ENCODE measurements at regions of chr2 and their contacts with region 1.

Region 1: DNA sequence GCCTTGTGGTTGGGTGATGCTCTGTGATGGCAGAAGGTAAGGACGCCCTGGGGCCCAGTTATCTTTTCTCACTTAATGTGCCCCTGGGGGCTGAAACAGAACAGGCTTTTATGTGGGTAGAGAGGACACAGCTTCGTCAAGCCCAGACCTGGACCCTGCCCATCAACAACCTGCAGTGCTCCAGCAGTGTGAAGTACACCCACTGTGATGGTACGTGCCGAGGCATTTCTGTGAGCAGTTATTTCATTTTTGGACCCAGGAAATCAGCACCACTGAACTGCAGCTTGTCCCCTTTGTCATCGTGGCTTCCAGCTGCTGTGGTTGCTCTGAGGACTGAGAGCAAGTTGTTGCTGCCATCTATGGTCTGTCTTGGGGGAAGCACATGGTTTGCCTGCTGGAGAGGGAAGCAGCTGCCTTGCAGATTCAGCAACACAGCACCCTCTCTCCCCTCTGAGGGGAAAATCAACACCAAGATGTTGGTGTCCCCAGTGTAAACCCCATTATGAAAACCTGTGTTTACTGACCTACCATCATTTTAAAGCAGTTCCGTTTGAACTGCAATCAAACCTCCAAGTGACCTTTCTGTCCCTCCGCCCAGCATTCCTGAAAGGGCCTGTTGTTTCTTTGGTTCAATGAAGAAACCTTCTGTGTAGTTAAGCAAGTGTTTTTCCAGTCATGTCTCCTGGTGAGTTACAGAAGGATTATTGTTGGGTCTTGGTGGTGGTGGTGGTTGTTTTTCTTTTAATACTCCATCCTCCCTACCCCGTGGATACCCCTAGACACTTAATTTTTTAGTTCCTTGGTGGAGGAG is 158.2 kb downstream of the MGAT5 start:
- DNase-seq: peak; percentile 50 to 92 (median 86)
- H3K4me3 ChIP-seq: peak overlapping the region in 47 of 59 donors; percentile 1 to 50 (median 25)
- H3K27ac ChIP-seq: peak overlapping the region; percentile 44 to 95 (median 90)
- H3K27me3 ChIP-seq: no peaks in the 10 kb centered on the region
- CTCF ChIP-seq: peak; percentile 49 to 91 (median 79)

Region 2: DNA sequence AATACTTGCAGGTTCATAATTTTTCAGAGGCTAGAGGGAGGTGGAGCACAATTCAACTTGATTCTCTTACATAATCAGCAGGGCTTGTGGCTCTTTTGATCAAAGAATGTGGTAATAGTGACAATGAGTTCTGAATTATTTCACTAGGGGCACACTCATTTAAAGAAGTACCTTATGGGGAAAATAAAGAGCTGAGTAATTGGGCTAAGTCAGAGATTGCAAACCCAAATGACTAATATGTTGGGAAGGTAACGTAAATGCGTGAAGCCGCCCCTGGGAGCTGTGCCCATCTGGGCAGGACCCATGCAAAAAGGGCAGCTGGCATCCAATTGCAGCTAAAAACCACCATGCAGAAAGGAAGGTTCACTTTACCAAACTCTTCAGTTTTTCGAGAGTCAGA is 879.1 kb before region 1 on chr2:
- intact Hi-C with region 1: no loop called
- DNase-seq: no peak
- H3K4me3 ChIP-seq: no peak overlapping the region
- H3K27ac ChIP-seq: no peak overlapping the region
- H3K27me3 ChIP-seq: no peaks in the 10 kb centered on the region
- CTCF ChIP-seq: no peak

Region 3: GRCh38 chr2:134193006-134193405 is 219.0 kb before region 1 on chr2:
- intact Hi-C with region 1: loop called in 1 of 2 experiments (anchors 5 kb)
- DNase-seq: no peak
- H3K4me3 ChIP-seq: no peak overlapping the region
- H3K27ac ChIP-seq: no peak overlapping the region
- H3K27me3 ChIP-seq: no peaks in the 10 kb centered on the region
- CTCF ChIP-seq: no peak

Region 4: DNA sequence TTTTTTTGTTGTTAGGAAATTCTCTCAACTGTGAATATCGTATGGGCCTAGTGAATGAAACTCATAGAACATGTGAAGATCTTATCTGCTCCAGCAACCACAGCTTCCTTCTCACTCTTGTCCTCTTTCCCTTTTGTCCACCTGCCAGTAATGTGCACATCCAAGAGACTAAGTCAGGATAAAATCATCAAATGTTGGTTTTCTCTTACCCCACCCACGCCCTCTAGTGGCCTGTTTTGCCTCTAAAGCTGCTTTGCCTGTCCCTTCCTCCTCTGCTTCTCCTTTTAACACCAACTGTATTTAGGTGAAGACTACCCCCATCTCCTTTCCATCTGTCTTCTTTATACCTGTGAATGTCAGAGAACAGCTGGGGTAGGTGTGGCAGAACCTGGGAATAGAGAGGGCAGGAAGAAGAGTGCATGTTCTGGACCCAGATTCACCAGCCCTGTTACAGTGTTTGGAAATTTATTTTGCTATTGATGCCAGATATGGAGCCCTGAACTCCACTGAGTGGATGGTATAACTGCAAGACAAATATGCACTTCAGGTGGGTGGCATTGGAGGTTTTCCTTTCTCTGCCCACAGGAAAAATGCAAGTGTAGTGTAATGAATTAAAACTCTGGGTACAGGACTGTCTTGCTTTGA is 166.6 kb before region 1 on chr2:
- intact Hi-C with region 1: loop called in 1 of 2 experiments (anchors 5 kb)
- DNase-seq: peak in 9 of 10 donors; percentile 60 to 92 (median 80)
- H3K4me3 ChIP-seq: no peak overlapping the region
- H3K27ac ChIP-seq: peak overlapping the region in 11 of 59 donors; percentile 6 to 69 (median 33)
- H3K27me3 ChIP-seq: no peaks in the 10 kb centered on the region
- CTCF ChIP-seq: peak; percentile 52 to 93 (median 80)

Region 5: GRCh38 chr2:134261398-134262131 is 150.5 kb before region 1 on chr2:
- intact Hi-C with region 1: loop called in 1 of 2 experiments (anchors 5 kb)
- DNase-seq: no peak
- H3K4me3 ChIP-seq: no peak overlapping the region
- H3K27ac ChIP-seq: peak overlapping the region in 43 of 59 donors; percentile 1 to 97 (median 91)
- H3K27me3 ChIP-seq: no peaks in the 10 kb centered on the region
- CTCF ChIP-seq: no peak

Region 6: DNA sequence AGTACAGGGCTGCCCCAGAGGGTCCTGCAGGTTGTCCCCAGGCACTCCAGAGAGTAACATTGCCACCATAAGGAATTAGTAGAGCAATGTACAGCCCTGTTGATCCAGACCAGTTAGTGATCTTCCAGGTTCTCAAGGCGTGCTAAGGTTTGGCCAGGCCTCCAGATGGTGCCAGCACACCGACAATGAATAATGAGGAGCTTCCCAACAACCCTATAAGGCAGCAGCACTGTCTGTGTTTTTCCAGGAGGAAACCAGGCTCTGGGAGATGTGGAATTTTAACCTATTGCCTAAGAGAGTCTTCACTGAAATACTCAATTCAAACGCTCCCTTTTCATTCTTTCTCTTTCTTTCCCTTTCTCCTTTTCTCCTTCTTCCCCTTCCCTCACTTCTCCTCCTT is 36.1 kb before region 1 on chr2:
- intact Hi-C with region 1: loop called (anchors 2 to 5 kb)
- DNase-seq: peak; percentile 42 to 79 (median 66)
- H3K4me3 ChIP-seq: peak overlapping the region in 1 of 59 donors; percentile 2
- H3K27ac ChIP-seq: peak overlapping the region in 43 of 59 donors; percentile 4 to 87 (median 50)
- H3K27me3 ChIP-seq: no peaks in the 10 kb centered on the region
- CTCF ChIP-seq: peak in 55 of 56 donors; percentile 23 to 78 (median 51)

Region 7: GRCh38 chr2:134454931-134455330 is 42.9 kb after region 1 on chr2:
- intact Hi-C with region 1: loop called in 1 of 2 experiments (anchors 2 kb)
- DNase-seq: peak in 1 of 10 donors; percentile 9
- H3K4me3 ChIP-seq: no peak overlapping the region
- H3K27ac ChIP-seq: no peak overlapping the region
- H3K27me3 ChIP-seq: no peaks in the 10 kb centered on the region
- CTCF ChIP-seq: no peak

Measured in dorsolateral prefrontal cortex (tissue), 120 donors.